ENCODE measurements at regions of chr2 and their contacts with region 1.

Region 1: GRCh38 chr2:132884705-132885104 is 214.7 kb upstream of the LYPD1 start:
- DNase-seq: no peak
- H3K4me3 ChIP-seq: no peak overlapping the region
- CTCF ChIP-seq: no peak
- POLR2A ChIP-seq: no peak

Region 2: GRCh38 chr2:131754929-131755720 is 1129.6 kb before region 1 on chr2:
- intact Hi-C with region 1: loop called (anchors 5 kb)
- DNase-seq: no peak
- H3K4me3 ChIP-seq: no peak overlapping the region
- CTCF ChIP-seq: no peak
- POLR2A ChIP-seq: no peak

Measured in lower leg skin (tissue), 4 donors.